ENCODE measurements at regions of chr19 and their contacts with region 1.

Region 1: DNA sequence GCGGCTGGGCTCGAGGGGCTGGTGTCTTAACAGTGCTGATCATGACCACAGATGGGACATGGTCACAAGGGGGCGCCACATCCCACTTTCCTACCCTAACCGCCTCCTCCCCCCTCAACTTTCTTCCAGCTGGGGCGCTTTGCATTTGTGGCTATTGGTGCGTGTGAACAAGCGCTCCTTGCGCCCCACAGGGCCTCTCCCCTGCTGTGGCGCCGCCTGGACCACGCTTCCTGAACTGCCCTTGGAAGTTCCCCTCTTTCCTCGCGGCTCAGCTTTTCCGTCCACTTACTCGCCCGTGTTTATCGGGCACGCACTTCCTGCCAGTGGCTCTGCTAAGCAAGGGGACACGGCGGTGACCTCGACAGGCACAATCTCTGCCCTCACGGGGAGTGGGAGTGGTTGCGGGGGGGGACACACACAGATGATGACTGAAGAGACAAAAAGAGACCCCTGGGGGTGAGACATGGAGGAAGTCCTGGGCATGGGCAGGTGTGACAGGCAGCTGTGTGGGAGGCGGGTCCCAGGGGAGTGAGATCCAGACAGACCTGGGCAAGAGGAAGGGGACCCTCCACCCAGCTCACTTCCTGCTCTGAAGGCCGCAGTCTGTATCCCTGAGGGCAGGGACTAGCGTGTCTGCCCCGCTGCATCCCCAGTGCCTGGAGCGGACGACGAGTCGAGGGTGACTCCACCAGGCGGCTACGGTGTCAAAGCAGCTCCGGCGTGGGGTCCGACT is 40.3 kb downstream of the ZNF787 start:
- DNase-seq: peak; percentile 76
- H3K4me3 Mint-ChIP-seq: peak overlapping the region; percentile 68
- H3K27ac Mint-ChIP-seq: no peak overlapping the region
- H3K4me1 Mint-ChIP-seq: peaks cover 10% of the 10 kb centered on the region
- H3K27me3 Mint-ChIP-seq: peaks cover 4% of the 10 kb centered on the region

Region 2: DNA sequence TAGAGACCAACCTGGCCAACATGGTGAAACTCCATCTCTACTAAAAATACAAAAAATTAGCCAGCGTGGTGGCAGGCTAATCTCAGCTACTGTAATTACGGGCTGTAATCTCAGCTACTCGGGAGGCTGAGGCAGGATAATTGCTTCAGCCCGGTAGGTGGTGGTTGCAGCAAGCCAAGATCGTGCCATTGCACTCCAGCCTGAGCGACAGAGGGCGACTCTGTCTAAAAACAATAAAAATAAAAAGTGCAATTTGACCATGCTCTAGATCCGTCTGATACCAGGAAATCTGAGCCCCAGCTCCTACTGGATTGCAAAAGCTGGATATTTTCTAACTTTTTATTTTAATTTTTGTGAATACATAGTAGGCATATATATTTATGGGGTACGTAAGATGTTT is 114.2 kb before region 1 on chr19:
- CTCF ChIA-PET with region 1: no interaction called
- POLR2A ChIA-PET with region 1: no interaction called
- DNase-seq: no peak
- H3K4me3 Mint-ChIP-seq: no peak overlapping the region
- H3K27ac Mint-ChIP-seq: no peak overlapping the region
- H3K4me1 Mint-ChIP-seq: no peaks in the 10 kb centered on the region
- H3K27me3 Mint-ChIP-seq: no peaks in the 10 kb centered on the region

Region 3: GRCh38 chr19:55986487-55986886 is 94.3 kb before region 1 on chr19 and contains the start of gene NLRP5:
- CTCF ChIA-PET with region 1: no interaction called
- POLR2A ChIA-PET with region 1: no interaction called
- DNase-seq: no peak
- H3K4me3 Mint-ChIP-seq: no peak within 1 kb of the TSS
- H3K27ac Mint-ChIP-seq: no peak within 1 kb of the TSS
- H3K4me1 Mint-ChIP-seq: no peaks in the 10 kb centered on the region
- H3K27me3 Mint-ChIP-seq: no peaks in the 10 kb centered on the region
- total RNA-seq, gene NLRP5: not detected

Region 4: DNA sequence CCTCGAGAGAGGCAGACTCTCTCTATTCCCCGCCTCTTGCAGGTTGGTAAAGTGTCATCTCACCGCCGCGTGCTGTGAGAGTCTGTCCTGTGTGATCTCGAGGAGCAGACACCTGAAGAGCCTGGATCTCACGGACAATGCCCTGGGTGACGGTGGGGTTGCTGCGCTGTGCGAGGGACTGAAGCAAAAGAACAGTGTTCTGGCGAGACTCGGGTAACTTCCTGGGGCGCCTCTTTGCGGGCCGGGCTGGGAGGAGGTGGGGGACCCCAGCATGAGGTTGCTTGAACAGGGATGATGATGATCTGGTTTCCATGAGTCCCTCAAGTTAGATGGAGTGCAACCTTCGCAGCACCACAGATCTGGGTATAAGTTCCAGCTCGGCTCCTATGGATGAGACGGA is 27.2 kb before region 1 on chr19:
- CTCF ChIA-PET with region 1: no interaction called
- POLR2A ChIA-PET with region 1: no interaction called
- DNase-seq: no peak
- H3K4me3 Mint-ChIP-seq: no peak overlapping the region
- H3K27ac Mint-ChIP-seq: no peak overlapping the region
- H3K4me1 Mint-ChIP-seq: no peaks in the 10 kb centered on the region
- H3K27me3 Mint-ChIP-seq: no peaks in the 10 kb centered on the region

Region 5: GRCh38 chr19:56066152-56067023 is 14.4 kb before region 1 on chr19:
- CTCF ChIA-PET with region 1: interaction called, 16 read pairs
- POLR2A ChIA-PET with region 1: interaction called, 3 read pairs
- DNase-seq: peak; percentile 61
- H3K4me3 Mint-ChIP-seq: peak overlapping the region; percentile 6
- H3K27ac Mint-ChIP-seq: no peak overlapping the region
- H3K4me1 Mint-ChIP-seq: peaks cover 14% of the 10 kb centered on the region
- H3K27me3 Mint-ChIP-seq: peaks cover 9% of the 10 kb centered on the region

Region 6: GRCh38 chr19:56270676-56271075 is 189.8 kb after region 1 on chr19:
- CTCF ChIA-PET with region 1: no interaction called
- POLR2A ChIA-PET with region 1: no interaction called
- DNase-seq: no peak
- H3K4me3 Mint-ChIP-seq: no peak overlapping the region
- H3K27ac Mint-ChIP-seq: no peak overlapping the region
- H3K4me1 Mint-ChIP-seq: no peaks in the 10 kb centered on the region
- H3K27me3 Mint-ChIP-seq: no peaks in the 10 kb centered on the region

Measured in activated CD4-positive, alpha-beta memory T cell treated with anti-CD3 and anti-CD28 coated beads, Interleukin-2, amount 10 ng/mL, durations not matched to agents 7 days and 5 days (primary cell).